Gastrocnemius medialis (tissue), 4 donors: ENCODE measurements at regions of chr10 and their contacts with region 1.

Region 1: DNA sequence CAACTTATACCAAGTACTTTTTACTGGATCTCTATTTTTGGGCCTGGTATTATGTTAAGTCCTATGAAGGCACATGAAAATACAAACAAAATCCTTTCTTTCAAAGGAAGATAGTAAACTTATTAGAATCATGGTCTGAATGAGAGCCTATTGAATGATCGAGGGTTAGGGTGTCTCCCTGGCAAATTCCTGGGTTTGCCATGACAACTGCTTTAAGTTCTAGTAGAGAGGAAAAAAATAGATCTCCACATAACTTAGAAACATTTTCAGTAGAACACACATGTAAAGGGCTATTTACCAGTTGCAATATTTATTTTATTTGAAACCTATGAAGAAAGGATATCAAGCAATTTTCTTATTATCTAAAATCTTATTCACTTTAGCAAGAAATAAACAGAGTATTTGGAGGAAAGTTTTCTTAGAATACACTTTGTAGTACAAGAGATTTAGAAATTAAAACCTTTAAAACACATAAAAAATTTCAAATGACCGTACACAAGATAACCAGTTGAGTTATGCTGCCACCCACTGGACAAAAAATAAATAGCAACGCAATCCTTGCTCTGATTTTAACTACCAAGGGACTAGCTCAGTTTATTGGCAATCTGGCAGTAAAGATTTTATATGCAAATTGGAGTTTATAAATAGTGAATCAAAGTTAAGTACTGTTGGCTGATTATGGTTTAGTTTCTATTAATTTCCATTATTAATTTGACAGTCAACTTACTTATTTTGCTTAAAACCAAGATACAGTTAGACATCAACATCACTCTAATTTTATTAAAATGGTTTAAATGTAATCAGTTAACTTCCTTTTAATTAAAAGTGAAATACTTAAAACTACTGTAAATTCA is 33.9 kb downstream of the CACUL1 start:
- DNase-seq: no peak
- ATAC-seq: no peak
- H3K4me3 ChIP-seq: no peak overlapping the region
- H3K27ac ChIP-seq: no peak overlapping the region
- H3K4me1 ChIP-seq: peaks cover 41 to 47% of the 10 kb centered on the region in 2 donors
- H3K27me3 ChIP-seq: no peaks in the 10 kb centered on the region
- CTCF ChIP-seq: peak; percentile 63 to 92 (median 76)
- POLR2A ChIP-seq: no peak

Region 2: DNA sequence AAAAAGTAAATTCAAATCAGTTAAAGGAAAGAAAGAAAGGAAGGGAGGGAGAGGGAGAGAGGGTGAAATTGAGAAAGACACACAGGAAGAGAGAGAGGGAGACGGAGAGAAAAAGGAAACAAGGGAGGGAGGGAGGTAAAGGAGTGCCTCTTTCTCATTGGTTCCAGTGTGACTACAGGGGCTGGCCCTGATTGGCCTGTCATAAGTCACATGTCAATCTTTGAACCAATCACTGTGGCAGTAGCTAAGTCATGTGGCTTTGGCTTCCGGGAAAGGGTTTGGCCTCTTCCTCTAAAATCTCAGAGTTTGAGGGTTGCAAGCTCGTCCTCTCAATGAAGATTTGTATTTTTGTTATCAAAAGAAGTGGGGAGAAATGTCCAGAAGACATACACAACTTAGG is 824.4 kb before region 1 on chr10:
- in situ Hi-C with region 1: no loop called
- intact Hi-C with region 1: no loop called
- DNase-seq: no peak
- ATAC-seq: no peak
- H3K4me3 ChIP-seq: no peak overlapping the region
- H3K27ac ChIP-seq: no peak overlapping the region
- H3K4me1 ChIP-seq: no peaks in the 10 kb centered on the region
- H3K27me3 ChIP-seq: no peaks in the 10 kb centered on the region
- CTCF ChIP-seq: no peak
- POLR2A ChIP-seq: no peak

Region 3: DNA sequence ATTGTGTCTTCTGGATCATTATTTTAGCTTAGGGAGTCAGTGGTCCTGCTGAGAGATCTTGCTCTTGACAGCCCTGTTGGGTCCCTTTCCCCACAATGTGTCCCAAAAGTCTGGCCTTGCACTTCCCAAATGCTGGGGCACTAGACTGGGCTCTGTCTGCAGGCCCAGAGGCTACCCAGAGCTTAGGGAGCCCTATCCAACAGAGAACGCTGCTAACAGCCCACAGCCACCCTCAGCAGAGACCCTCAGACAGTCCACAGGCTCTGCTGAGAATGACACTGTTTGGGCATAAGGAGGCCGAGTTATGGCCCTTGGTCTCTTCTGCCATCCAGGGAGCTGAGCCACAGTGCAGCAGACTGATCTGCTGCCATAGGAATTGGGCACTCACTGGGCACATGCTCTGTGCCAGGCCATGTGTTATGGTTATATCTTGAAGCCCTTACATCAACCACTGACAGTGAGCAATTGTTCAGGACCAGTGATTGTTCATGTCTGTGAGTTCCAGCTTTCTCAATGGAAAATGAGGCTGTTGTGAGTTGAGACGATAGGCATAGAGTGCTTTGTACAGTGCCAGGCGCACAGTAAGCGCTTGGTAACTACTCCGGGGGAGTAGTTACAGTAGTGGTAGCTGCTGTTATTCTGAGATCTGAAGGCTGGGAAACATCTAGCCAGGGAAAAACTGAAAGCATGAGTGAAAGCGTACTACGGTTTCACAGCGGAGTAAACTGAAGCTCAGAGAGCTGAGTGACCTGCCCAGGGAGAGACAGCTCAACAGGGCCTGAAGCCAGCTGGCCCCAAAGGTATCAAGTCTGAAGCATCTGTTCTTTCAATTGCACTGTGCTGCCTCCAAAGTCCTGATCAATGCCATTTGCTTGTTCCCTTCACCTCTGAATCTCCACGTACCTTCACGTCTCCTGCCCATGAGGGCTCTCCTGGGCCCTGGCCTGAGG is 47.9 kb before region 1 on chr10:
- in situ Hi-C with region 1: no loop called
- intact Hi-C with region 1: loop called (anchors 5 kb)
- DNase-seq: peak in 1 of 2 donors; percentile 31
- ATAC-seq: peak; percentile 22 to 68
- H3K4me3 ChIP-seq: peak overlapping the region in 1 of 4 donors; percentile 16
- H3K27ac ChIP-seq: peak overlapping the region; percentile 57 to 75 (median 72)
- H3K4me1 ChIP-seq: peaks cover 37 to 50% of the 10 kb centered on the region in 2 donors
- H3K27me3 ChIP-seq: no peaks in the 10 kb centered on the region
- CTCF ChIP-seq: no peak
- POLR2A ChIP-seq: no peak